HAP-1 (cell line): ENCODE measurements at regions of chr6 and their contacts with region 1.

Region 1: DNA sequence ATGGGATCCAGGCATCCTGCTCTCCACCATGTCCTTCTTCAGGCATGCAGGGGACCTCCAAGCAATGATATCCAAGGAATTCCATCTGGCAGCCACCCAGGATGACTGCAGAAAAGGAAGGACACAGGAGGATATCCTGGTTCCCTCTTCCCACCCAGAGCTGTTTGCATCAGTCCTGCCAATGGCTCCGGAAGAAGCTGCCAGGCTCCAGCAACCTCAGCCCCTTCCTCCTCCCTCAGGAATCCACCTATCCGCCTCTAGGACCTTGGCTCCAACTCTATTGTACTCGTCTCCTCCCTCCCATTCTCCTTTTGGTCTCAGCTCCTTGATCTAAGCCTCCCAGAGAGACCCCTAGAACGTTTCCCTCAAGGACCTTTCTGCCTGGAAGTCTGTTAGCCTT is 733 bp upstream of the PSORS1C2 start:
- DNase-seq: no peak
- H3K4me3 ChIP-seq: no peak overlapping the region
- H3K4me1 ChIP-seq: peaks cover 3% of the 10 kb centered on the region
- H3K27me3 ChIP-seq: no peaks in the 10 kb centered on the region

Region 2: DNA sequence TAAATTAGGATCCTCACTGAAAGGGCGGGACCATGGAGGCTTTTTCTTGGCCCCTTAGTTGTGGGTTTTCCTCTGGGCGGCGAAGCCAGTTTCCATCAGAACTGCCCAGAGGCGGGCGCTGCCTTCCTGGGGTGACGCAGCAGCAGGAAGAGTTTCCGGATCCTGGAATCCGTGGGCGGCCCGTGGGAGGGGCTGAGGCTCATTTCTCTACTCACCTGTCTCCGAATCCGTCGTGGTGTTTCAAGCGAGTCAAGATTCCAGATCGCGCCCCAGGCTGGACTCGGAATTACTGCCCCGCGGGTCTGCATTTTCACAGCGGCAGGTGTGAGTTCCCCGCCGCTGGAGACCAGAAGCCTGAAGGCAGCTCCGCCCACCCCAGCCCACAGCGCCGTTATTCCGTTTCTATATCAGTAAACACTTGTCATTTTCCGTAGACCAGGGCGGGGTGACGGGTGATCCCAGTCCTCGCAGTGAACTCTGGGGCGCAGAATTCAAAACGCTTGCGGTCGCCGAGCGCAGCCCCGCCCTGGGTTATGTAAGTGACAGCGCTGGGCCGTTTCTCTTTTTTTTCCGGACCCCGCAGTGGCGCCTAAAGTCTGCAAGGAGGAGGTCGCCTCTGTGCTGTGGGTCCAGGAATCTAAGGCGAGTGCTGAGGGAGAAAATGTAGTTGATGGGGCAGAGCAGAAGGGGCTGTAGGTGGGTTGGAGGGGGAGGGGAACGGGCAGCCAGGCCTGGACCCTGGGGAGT is 58.1 kb after region 1 on chr6:
- in situ Hi-C with region 1: loop called (anchors 5 kb)
- DNase-seq: peak; percentile 72 to 92
- H3K4me3 ChIP-seq: peak overlapping the region; percentile 62
- H3K4me1 ChIP-seq: peaks cover 12% of the 10 kb centered on the region
- H3K27me3 ChIP-seq: no peaks in the 10 kb centered on the region